CD8-positive, alpha-beta T cell (primary cell): ENCODE measurements at regions of chr15 and their contacts with region 1.

Region 1: GRCh38 chr15:65184868-65185738 is at the start of gene CLPX:
- DNase-seq: peak; percentile 80 to 98 (median 92)
- ATAC-seq: peak; percentile 98
- H3K4me3 ChIP-seq: peak within 1 kb of the TSS; percentile 98 to 99
- H3K4me3 Mint-ChIP-seq: peak within 1 kb of the TSS; percentile 95
- H3K27ac ChIP-seq: peak within 1 kb of the TSS; percentile 75 to 88
- H3K27ac Mint-ChIP-seq: peak within 1 kb of the TSS; percentile 94
- H3K4me1 ChIP-seq: peaks cover 15% of the 10 kb centered on the region
- H3K4me1 Mint-ChIP-seq: peaks cover 28% of the 10 kb centered on the region
- H3K27me3 ChIP-seq: no peaks in the 10 kb centered on the region
- H3K27me3 Mint-ChIP-seq: no peaks in the 10 kb centered on the region
- CTCF ChIP-seq: no peak
- total RNA-seq, gene CLPX: 29.0 to 31.7 TPM

Region 2: DNA sequence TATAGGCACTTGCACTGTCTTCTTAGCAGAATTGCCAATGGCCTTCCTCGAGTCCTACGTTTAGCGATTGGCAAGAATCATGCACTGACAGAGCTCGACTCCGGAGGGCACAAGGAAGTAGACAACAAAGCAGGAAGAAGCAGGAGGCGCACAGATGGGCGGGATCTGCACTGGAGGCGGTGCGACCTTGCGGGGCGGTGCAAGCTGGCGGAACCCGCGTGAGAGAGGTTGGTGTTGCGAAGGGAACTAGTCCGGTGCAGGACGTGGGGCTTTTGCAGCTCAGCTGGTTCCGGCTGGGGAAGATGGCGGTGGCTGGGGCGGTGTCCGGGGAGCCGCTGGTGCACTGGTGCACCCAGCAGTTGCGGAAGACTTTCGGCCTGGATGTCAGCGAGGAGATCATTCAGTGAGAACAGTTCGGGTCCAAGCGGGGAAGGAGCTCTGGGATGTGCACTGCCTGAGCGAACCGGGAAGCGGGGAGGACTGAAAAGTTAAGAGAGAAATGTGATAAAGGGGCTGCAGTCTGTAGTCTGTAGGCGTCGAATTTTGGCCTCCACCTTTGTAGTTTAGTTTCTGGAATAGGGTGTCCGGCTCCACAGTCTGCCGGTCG is 797.4 kb before region 1 on chr15 and contains the start of gene TRIP4:
- CTCF ChIA-PET with region 1: interaction called, 5 read pairs
- POLR2A ChIA-PET with region 1: no interaction called
- intact Hi-C with region 1: loop called (anchors 5 to 10 kb)
- DNase-seq: peak; percentile 93 to 98 (median 96)
- ATAC-seq: peak; percentile 99
- H3K4me3 ChIP-seq: peak within 1 kb of the TSS; percentile 86 to 98
- H3K4me3 Mint-ChIP-seq: peak within 1 kb of the TSS; percentile 99
- H3K27ac ChIP-seq: peak within 1 kb of the TSS; percentile 51 to 69
- H3K27ac Mint-ChIP-seq: peak within 1 kb of the TSS; percentile 97
- H3K4me1 ChIP-seq: peaks cover 19% of the 10 kb centered on the region
- H3K4me1 Mint-ChIP-seq: peaks cover 21% of the 10 kb centered on the region
- H3K27me3 ChIP-seq: no peaks in the 10 kb centered on the region
- H3K27me3 Mint-ChIP-seq: no peaks in the 10 kb centered on the region
- CTCF ChIP-seq: no peak
- total RNA-seq, gene TRIP4: 10.7 to 11.2 TPM

Region 3: DNA sequence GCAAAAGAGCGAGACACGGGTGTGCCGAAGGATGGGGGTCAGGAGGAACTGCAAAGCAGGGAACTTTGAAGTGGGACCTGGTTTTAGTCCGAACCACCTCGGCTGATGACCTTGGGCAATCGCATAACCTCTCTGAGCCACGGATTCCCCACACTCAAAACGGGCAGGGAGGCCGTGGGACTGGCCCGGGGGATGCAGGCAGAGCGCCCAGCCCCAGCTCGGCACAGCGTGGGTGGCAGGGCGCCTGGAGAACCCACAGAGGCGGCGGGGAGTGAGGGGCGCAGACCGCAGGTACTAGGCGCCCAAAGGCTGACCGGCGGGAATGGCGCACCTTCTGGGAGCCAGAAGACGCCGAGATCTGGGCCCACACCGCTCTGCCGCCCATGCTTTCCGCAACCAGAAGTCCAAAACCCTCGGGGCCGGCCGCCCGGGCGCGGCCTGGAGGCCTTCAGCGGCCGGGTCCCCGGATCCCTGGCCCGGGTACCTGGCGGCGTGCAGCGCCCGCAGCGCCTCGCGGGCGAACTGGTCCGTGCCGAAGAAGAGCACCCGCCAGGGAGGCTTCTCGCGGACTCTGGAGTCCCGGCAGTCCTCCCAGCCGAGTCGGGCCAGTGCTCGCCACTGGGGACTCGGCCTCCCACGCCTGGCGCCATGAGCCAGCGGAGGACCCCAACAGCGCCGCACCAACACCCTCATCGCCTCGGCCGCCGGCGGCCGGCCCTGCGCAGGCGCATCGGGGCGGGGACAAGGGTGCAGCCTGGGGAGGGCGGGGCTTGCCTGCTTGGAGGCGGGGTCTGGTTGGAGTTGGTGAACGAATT is 156.0 kb before region 1 on chr15 and contains the start of gene MTFMT:
- CTCF ChIA-PET with region 1: interaction called, 3 read pairs
- POLR2A ChIA-PET with region 1: no interaction called
- intact Hi-C with region 1: loop called in 1 of 2 experiments (anchors 5 kb)
- DNase-seq: peak; percentile 88 to 96 (median 93)
- ATAC-seq: peak; percentile 96
- H3K4me3 ChIP-seq: peak within 1 kb of the TSS; percentile 69 to 82
- H3K4me3 Mint-ChIP-seq: peak within 1 kb of the TSS; percentile 86
- H3K27ac ChIP-seq: peak within 1 kb of the TSS; percentile 53 to 61
- H3K27ac Mint-ChIP-seq: peak within 1 kb of the TSS; percentile 68
- H3K4me1 ChIP-seq: peaks cover 14% of the 10 kb centered on the region
- H3K4me1 Mint-ChIP-seq: peaks cover 24% of the 10 kb centered on the region
- H3K27me3 ChIP-seq: no peaks in the 10 kb centered on the region
- H3K27me3 Mint-ChIP-seq: peaks cover 14% of the 10 kb centered on the region
- CTCF ChIP-seq: no peak
- total RNA-seq, gene MTFMT: 6.9 to 7.4 TPM

Region 4: GRCh38 chr15:65217526-65218482 is 32.7 kb after region 1 on chr15:
- CTCF ChIA-PET with region 1: no interaction called
- POLR2A ChIA-PET with region 1: no interaction called
- intact Hi-C with region 1: no loop called
- DNase-seq: peak in 2 of 9 experiments; percentile 19 to 24
- ATAC-seq: no peak
- H3K4me3 ChIP-seq: no peak overlapping the region
- H3K4me3 Mint-ChIP-seq: no peak overlapping the region
- H3K27ac ChIP-seq: no peak overlapping the region
- H3K27ac Mint-ChIP-seq: no peak overlapping the region
- H3K4me1 ChIP-seq: no peaks in the 10 kb centered on the region
- H3K4me1 Mint-ChIP-seq: peaks cover 3% of the 10 kb centered on the region
- H3K27me3 ChIP-seq: no peaks in the 10 kb centered on the region
- H3K27me3 Mint-ChIP-seq: no peaks in the 10 kb centered on the region
- CTCF ChIP-seq: no peak

Region 5: DNA sequence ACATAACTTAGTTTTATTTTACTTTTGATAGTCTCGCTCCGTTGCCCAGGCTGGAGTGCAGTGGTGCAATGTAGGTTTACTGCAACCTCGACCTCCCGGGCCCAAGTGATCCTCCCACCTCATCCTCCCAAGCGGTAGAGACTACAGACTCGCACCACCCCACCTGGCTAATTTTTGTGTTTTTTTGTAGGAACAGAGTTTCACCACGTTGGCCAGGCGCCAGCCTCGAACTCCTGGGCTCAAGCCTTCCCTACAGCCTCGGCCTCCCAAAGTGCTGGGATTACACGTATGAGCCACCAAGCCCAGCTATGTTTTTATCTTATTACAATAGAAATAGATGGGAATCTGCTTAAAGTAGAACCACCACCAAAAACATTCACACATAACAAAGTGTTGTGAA is 113.6 kb after region 1 on chr15:
- CTCF ChIA-PET with region 1: interaction called, 11 read pairs
- POLR2A ChIA-PET with region 1: interaction called, 18 read pairs
- intact Hi-C with region 1: loop called in 1 of 2 experiments (anchors 1 kb)
- DNase-seq: no peak
- ATAC-seq: no peak
- H3K4me3 ChIP-seq: peak overlapping the region in 1 of 2 experiments; percentile 6
- H3K4me3 Mint-ChIP-seq: peak overlapping the region; percentile 88
- H3K27ac ChIP-seq: peak overlapping the region in 1 of 2 experiments; percentile 41
- H3K27ac Mint-ChIP-seq: peak overlapping the region; percentile 84
- H3K4me1 ChIP-seq: peaks cover 36% of the 10 kb centered on the region
- H3K4me1 Mint-ChIP-seq: peaks cover 45% of the 10 kb centered on the region
- H3K27me3 ChIP-seq: no peaks in the 10 kb centered on the region
- H3K27me3 Mint-ChIP-seq: no peaks in the 10 kb centered on the region
- CTCF ChIP-seq: no peak

Region 6: DNA sequence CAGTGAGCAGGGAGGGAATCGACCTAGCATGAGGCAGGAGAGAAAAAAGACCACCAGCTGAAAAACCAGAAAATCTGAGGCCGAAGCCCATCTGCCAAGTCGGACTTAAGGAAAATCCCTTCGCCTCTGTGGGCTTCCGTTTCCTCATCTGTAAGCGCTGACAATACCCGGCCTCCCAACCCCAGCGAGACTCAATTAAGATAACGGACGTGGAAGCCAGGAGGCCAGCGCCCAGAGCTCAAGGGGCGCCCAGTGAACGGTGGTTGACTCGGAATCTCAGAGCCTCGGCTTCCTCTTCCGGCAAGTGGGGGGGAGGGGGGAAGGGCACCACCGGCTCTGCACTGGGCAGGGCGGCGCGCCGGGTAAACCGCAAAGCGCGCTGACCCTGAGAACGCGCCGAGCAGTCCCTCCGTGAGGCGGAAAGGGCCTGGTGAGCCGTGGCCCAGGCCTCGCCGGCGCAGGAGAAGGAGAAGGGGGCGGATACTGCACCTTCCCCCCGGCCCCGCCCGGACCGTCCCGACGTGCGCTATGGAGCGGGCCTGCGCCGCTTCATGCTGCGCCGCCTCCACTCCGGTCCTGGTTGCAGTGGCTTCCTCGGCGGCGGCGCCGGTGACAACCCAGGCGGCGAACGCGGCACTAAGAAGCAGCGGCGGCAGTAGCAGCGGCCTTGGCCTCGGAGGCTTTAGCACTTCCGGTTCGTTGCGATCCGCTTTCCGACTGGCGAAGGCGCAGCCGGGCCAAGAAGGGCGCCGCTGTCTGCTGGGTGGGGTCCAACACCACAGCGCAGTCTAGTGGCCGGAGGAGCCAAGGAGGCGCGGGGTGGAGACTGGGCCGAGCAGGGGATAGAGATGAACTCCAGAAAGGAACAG is 332.1 kb after region 1 on chr15 and contains the start of gene DPP8:
- CTCF ChIA-PET with region 1: no interaction called
- POLR2A ChIA-PET with region 1: no interaction called
- intact Hi-C with region 1: loop called in 1 of 2 experiments (anchors 1 kb)
- DNase-seq: peak; percentile 93 to 97 (median 94)
- ATAC-seq: peak; percentile 90
- H3K4me3 ChIP-seq: peak within 1 kb of the TSS; percentile 98 to 99
- H3K4me3 Mint-ChIP-seq: peak within 1 kb of the TSS; percentile 96
- H3K27ac ChIP-seq: peak within 1 kb of the TSS; percentile 72 to 93
- H3K27ac Mint-ChIP-seq: peak within 1 kb of the TSS; percentile 96
- H3K4me1 ChIP-seq: peaks cover 32% of the 10 kb centered on the region
- H3K4me1 Mint-ChIP-seq: peaks cover 49% of the 10 kb centered on the region
- H3K27me3 ChIP-seq: no peaks in the 10 kb centered on the region
- H3K27me3 Mint-ChIP-seq: no peaks in the 10 kb centered on the region
- CTCF ChIP-seq: peak; percentile 82
- total RNA-seq, gene DPP8: 30.5 to 38.1 TPM